HAP-1 (cell line): ENCODE measurements at regions of chr1 and their contacts with region 1.

Region 1: GRCh38 chr1:206106328-206107167 is 10.6 kb downstream of the AVPR1B start:
- DNase-seq: peak; percentile 53 to 86
- H3K4me3 ChIP-seq: no peak overlapping the region
- H3K4me1 ChIP-seq: no peaks in the 10 kb centered on the region
- H3K27me3 ChIP-seq: no peaks in the 10 kb centered on the region

Region 2: GRCh38 chr1:205791568-205792180 is 314.9 kb before region 1 on chr1:
- in situ Hi-C with region 1: loop called (anchors 10 kb)
- DNase-seq: peak; percentile 39 to 79
- H3K4me3 ChIP-seq: no peak overlapping the region
- H3K4me1 ChIP-seq: no peaks in the 10 kb centered on the region
- H3K27me3 ChIP-seq: no peaks in the 10 kb centered on the region

Region 3: GRCh38 chr1:205919026-205919746 is 187.4 kb before region 1 on chr1:
- in situ Hi-C with region 1: loop called (anchors 5 kb)
- DNase-seq: peak; percentile 62 to 85
- H3K4me3 ChIP-seq: no peak overlapping the region
- H3K4me1 ChIP-seq: no peaks in the 10 kb centered on the region
- H3K27me3 ChIP-seq: no peaks in the 10 kb centered on the region

Region 4: DNA sequence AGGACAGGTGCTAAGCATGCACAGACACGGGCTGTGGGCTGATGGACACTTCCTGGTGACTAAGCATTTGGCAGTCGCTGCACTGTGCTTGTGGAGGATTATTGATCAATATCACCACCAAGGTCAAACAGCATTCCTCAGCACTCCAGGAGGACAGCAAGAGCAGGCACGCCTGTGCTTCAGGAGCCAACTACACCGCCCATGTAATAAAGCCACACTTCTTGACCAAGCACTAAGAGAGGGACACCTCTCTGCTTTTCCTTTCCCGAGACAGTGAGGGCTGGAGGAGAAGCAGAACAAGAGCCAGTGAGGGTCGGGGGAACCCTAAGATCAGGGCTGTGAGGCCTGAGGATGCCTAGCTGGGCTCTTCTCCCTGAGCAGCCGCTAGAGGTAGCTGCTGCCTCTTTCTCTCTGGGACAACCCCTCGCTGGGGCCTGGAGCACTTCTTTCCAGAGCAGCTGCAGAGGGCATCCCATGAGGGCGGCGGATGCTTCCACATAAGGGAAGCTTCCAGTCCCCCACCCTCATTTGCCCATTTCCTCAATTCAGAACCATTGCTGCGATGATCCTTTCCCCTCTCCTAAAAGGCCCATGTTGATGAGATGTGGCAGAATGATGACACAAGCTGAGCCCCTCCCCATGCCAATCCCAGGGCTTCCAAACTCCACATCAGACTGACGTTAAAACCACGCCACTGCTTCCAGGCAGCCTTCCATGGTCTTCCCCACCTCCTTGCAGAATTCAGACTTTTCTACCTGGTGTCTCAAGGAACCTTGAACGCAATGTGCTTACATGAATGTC is 122.4 kb before region 1 on chr1:
- in situ Hi-C with region 1: loop called (anchors 5 kb)
- DNase-seq: peak; percentile 28 to 69
- H3K4me3 ChIP-seq: no peak overlapping the region
- H3K4me1 ChIP-seq: no peaks in the 10 kb centered on the region
- H3K27me3 ChIP-seq: no peaks in the 10 kb centered on the region

Region 5: DNA sequence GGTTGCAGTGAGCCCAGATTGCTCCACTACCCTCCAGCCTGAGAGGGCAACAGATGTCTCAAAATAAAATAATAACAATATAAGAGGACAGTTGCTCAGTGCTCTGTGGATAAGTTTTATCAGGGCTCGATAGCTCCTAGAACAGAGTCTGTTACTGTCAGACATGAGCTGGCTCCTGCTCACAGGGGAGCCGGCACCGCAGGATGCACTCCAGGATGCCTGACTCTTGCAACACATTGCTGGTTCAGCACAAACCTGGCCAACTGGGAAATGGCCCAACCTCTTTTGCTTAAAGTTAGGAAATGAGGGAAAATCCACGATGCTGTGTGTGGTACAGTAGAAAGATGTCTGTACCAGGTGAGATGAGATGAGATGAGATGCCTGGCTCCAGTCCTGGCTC is 77.1 kb before region 1 on chr1:
- in situ Hi-C with region 1: loop called (anchors 5 kb)
- DNase-seq: no peak
- H3K4me3 ChIP-seq: no peak overlapping the region
- H3K4me1 ChIP-seq: no peaks in the 10 kb centered on the region
- H3K27me3 ChIP-seq: peaks cover 4% of the 10 kb centered on the region; the same call in 1 of the 2 replicates